ENCODE measurements at regions of chr7 and their contacts with region 1.

Region 1: DNA sequence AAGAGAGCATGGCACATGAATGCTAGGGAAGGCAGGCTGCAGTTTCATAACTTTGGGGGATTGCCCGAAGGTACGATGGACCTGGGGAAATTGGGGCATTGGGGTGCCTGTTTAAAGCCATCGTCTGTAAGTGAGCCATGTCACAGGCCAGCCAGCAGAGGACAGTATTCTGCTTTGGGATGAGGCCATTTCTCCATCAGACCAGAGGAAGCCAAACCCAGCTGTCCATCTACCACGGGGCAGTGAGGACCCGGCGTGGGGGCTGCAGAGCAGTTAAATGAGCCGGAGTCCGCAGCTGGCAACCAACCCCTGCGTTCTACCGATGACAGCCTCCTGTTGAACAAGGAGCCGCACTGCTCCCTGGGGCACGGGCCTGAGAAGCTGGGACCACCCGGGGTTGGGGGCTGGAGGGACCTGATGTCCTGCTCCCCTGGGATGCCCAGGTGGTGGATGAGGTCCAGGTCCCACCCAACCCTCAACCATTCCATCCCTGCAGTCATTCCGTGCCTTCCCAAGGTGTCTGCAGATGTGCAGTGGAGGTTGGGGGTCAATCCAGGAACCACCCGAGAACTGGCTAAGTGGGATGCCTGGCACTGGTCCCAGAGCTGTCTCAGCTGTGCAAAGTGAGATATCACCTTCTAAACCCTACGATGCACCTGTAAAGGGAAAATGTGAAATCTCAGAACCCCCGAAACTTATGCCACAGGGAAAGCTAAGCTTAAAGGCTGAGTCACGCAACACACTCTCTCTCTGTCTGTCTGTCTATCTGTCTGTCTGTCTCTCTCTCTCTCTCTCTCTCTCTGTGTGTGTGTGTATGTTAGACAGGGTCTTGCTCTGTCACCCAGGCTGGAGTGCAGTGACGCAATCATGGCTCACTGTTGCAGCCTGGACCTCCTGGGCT is 12.1 kb upstream of the RHBDD2 start:
- DNase-seq: peak; percentile 58 to 73 (median 66)
- ATAC-seq: peak; percentile 79
- H3K4me3 ChIP-seq: no peak overlapping the region
- H3K27ac ChIP-seq: no peak overlapping the region
- H3K4me1 ChIP-seq: peaks cover 7% of the 10 kb centered on the region
- H3K27me3 ChIP-seq: no peaks in the 10 kb centered on the region
- CTCF ChIP-seq: peak; percentile 87 to 97 (median 90)
- POLR2A ChIP-seq: no peak

Region 2: DNA sequence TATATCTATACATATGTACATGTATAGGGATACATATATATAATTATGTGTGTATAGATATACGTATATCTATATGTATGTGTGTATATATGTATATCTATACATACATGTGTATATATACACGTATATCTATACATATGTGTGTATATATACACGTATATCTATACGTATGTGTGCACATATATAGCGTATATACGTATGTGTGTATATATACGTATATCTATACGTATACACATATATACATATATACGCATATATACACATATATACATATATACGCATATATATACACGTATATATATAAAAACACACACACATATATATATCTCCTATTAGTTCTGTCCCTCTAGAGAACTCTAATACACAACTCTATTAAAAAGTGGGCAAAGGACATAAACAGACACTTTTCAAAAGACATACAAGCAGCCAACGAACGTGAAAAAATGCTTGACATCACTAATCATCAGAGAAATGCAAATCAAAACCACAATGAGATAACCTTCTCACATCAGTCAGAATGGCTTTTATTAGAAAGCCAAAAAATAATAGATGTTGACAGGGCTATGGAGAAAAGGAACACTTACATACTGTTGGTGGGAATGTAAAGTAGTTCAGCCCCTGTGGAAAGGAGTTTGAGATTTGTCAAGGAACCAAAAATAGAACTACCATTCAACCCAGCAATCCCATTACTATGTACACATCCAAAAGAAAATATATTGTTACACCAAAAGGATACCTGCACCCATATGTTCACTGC is 149.6 kb after region 1 on chr7:
- intact Hi-C with region 1: loop called (anchors 5 kb)
- DNase-seq: no peak
- ATAC-seq: no peak
- H3K4me3 ChIP-seq: no peak overlapping the region
- H3K27ac ChIP-seq: no peak overlapping the region
- H3K4me1 ChIP-seq: no peaks in the 10 kb centered on the region
- H3K27me3 ChIP-seq: no peaks in the 10 kb centered on the region
- CTCF ChIP-seq: no peak
- POLR2A ChIP-seq: no peak

Measured in body of pancreas (tissue), 4 donors.